Astrocyte of the cerebellum (primary cell): ENCODE measurements at regions of chr15 and their contacts with region 1.

Region 1: DNA sequence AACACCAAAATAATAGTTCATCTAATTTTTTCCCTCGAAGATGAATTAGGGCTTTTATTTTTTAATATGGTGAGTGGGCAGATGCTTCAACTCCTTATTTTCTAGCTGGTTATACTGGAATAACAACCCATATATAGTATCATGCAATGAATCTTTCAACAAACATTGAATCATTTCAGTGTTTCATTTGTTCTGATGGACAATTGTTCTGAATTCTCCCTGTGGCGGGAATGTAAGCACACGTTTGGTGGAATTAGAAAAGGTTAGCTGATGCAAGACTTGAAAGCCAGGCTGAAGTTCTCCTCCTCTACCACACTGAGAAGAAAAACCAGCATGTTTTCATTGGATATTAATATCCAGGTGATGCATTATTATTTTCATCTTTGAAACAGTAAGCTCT is 177.8 kb upstream of the ONECUT1 start:
- DNase-seq: no peak
- H3K4me3 ChIP-seq: no peak overlapping the region
- CTCF ChIP-seq: no peak

Region 2: DNA sequence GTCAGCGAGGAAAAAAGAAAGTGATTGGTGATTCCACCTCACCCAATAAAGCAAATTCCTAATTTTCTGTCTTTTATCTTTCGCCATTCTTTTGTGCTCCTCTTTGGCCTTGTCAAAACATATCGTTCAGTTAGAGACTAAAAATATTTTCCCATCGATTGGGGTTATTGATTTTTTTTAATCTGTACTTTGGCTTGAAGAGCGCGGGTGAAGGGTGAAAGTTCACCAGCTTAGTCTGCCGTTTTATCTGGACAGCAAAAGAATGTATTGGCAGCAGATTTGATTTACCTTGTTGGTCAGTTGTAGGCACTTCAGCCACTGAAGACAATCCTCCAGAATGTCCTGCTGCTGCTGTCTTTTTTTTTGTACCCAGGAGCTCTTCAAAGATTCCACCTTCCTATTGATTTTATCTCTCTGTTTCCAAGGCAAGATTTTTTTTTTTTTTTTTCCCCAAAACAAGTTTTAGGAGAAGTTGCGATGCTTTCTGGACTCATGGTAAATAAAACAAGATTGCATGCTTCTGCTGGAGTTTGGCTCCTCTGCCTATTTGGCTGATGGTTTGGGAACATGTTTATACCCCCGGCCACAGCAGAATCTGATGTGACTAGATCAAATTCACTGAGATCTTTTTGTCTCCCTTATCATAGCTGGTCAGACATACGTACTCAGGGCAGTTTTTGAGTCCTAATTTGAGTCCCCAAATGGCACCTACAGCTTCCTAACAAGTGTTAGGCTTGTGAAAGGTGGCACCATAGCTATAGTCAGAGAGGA is 91.5 kb after region 1 on chr15:
- in situ Hi-C with region 1: loop called (anchors 5 kb)
- DNase-seq: no peak
- H3K4me3 ChIP-seq: no peak overlapping the region
- CTCF ChIP-seq: no peak